Activated CD4-positive, alpha-beta T cell treated with anti-CD3 and anti-CD28 coated beads for 36 hours (primary cell): ENCODE measurements at regions of chr21 and their contacts with region 1.

Region 1: DNA sequence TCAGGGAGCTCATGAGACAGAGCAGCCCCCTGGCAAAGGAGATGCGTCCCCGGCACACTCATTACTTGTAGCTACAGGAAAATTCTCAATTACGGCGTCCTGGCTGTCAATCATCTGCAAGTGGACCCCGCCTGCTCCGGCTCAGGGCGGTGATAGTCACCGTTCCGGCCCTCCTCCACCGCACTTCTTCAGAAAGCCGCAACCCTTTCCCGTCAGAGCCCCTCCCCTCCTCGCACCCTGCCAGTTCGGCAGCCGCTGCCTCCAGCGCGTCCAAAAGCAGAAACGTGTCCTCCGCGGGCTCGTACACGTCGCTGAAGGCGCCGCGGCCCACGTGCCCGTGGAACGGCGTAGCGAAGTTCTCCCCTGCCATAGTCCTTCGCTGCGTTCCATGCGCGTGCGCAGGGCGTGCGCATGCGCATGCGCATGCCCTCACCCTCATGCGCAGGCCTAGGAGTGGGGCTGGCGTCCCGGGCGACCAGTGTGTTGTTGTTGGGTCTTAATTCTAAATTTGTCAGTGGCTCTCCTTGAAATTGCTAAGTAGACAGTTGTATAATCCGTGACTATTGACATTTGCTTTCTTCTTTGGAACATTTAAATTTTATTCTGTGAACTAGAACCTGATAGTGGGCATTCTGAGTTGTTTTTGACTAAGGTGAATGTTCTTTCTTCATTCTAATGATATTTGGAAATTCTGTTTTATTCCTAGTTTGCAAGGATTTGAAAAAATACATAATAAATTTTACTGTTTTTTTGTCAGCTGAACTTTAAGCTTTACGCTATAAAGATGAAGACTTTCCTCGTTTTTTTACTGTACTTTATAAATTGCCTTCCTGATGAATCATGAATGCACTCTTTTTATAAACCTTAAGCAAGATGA is 107.5 kb downstream of the LTN1 start:
- DNase-seq: peak; percentile 95
- ATAC-seq: peak; percentile 96
- H3K4me3 Mint-ChIP-seq: peak overlapping the region; percentile 86
- H3K27ac Mint-ChIP-seq: peak overlapping the region; percentile 99
- H3K4me1 Mint-ChIP-seq: peaks cover 16% of the 10 kb centered on the region
- H3K27me3 Mint-ChIP-seq: no peaks in the 10 kb centered on the region

Region 2: DNA sequence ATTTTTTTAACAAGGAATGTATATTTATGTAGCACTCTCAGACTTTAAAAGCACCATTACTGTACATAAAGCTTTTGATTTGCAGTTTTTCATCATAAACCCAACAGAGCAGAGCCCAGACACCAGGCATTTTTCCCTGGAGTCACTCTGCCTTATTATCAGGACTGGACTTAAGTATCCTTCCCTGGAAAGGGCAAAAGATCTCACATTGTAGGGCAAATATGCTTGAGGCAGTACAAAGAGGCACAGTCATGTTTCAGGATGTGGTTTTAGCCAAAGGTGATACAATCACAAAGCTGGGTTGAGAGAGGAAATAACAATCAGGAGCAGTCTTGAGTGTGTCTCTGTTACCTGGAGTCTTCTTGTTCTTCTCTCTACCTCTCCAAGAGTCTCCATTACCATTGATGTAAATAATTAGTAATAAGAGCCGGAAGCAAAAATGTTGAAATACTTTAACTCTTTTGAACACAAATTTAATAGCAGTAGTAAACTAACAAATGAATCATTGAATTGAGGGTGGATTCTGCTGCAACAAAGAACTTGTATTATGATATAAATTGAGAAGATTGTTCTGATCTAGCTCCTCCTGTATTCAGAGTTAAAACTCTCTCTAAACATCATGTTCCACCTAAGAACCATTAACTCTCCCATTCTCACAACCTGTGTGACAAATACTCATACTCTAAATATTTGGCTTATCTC is 53.0 kb before region 1 on chr21:
- CTCF ChIA-PET with region 1: interaction called, 4 read pairs
- POLR2A ChIA-PET with region 1: no interaction called
- intact Hi-C with region 1: loop called (anchors 1 to 2 kb)
- DNase-seq: no peak
- ATAC-seq: peak; percentile 93
- H3K4me3 Mint-ChIP-seq: no peak overlapping the region
- H3K27ac Mint-ChIP-seq: peak overlapping the region; percentile 71
- H3K4me1 Mint-ChIP-seq: peaks cover 65% of the 10 kb centered on the region
- H3K27me3 Mint-ChIP-seq: no peaks in the 10 kb centered on the region

Region 3: GRCh38 chr21:28852706-28853105 is 32.5 kb before region 1 on chr21:
- CTCF ChIA-PET with region 1: no interaction called
- POLR2A ChIA-PET with region 1: no interaction called
- intact Hi-C with region 1: no loop called
- DNase-seq: no peak
- ATAC-seq: no peak
- H3K4me3 Mint-ChIP-seq: no peak overlapping the region
- H3K27ac Mint-ChIP-seq: no peak overlapping the region
- H3K4me1 Mint-ChIP-seq: peaks cover 6% of the 10 kb centered on the region
- H3K27me3 Mint-ChIP-seq: no peaks in the 10 kb centered on the region

Region 4: GRCh38 chr21:28992526-28993292 is 107.5 kb after region 1 on chr21 and contains the start of gene LTN1:
- CTCF ChIA-PET with region 1: no interaction called
- POLR2A ChIA-PET with region 1: no interaction called
- intact Hi-C with region 1: loop called (anchors 1 to 2 kb)
- DNase-seq: peak; percentile 100
- ATAC-seq: peak; percentile 92
- H3K4me3 Mint-ChIP-seq: peak within 1 kb of the TSS; percentile 83
- H3K27ac Mint-ChIP-seq: peak within 1 kb of the TSS; percentile 90
- H3K4me1 Mint-ChIP-seq: peaks cover 44% of the 10 kb centered on the region
- H3K27me3 Mint-ChIP-seq: no peaks in the 10 kb centered on the region
- total RNA-seq, gene LTN1: 26.6 to 29.4 TPM

Region 5: DNA sequence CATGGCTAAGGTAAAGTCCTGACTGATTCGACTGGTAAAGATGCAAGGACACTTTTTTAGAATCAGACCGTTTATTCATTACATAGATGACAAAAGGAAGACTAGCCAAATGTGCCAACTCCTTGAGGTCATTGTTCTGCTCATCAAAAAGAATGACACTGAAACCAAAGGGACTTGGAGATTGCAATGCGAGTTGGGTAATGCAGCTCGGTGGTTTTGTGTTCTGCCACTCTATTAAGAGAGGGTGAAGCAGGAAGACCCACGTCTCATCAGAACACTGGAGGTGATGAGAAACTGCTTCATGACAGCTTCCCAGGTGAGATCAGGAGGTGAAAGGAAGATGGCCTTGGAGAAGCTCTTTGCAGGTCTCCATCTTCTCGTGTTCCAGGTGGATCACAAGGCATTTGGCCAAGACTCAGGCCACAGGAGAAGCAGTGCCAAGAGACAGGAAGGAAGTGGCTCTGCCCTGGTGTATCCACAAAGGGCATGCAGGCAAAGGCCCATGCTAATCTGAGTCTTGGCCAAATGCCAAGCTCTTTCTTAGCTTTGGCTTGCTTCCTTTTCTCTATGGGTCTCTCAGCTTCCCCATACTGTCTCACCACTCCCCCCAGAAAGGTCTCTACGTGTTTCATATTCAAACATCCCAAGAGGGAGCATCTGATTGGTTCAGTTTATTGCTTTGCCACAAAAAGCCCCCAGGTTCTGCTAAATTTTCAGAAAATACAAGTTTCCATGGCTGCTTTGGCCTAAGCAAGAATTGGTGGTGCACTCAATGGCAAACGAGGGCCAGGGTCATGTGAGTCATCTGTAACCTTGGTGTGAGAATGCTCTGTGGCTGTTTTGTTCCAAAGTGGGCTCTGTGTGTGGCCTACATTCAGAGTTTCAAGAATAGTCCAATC is 193.9 kb after region 1 on chr21:
- CTCF ChIA-PET with region 1: no interaction called
- POLR2A ChIA-PET with region 1: interaction called, 6 read pairs
- intact Hi-C with region 1: loop called in 1 of 2 experiments (anchors 2 kb)
- DNase-seq: peak; percentile 61
- ATAC-seq: peak; percentile 62
- H3K4me3 Mint-ChIP-seq: peak overlapping the region; percentile 80
- H3K27ac Mint-ChIP-seq: peak overlapping the region; percentile 85
- H3K4me1 Mint-ChIP-seq: peaks cover 59% of the 10 kb centered on the region
- H3K27me3 Mint-ChIP-seq: no peaks in the 10 kb centered on the region